ENCODE measurements at regions of chr2 and their contacts with region 1.

Region 1: GRCh38 chr2:216519154-216519762 is 20.6 kb downstream of the RPL37A start:
- DNase-seq: no peak
- ATAC-seq: peak; percentile 87 to 95 (median 90)
- H3K4me3 ChIP-seq: no peak overlapping the region
- H3K27ac ChIP-seq: no peak overlapping the region
- H3K4me1 ChIP-seq: no peaks in the 10 kb centered on the region
- H3K27me3 ChIP-seq: no peaks in the 10 kb centered on the region
- CTCF ChIP-seq: peak; percentile 82

Region 2: GRCh38 chr2:216233281-216233995 is 285.8 kb before region 1 on chr2:
- intact Hi-C with region 1: no loop called
- DNase-seq: no peak
- ATAC-seq: no peak
- H3K4me3 ChIP-seq: no peak overlapping the region
- H3K27ac ChIP-seq: no peak overlapping the region
- H3K4me1 ChIP-seq: no peaks in the 10 kb centered on the region
- H3K27me3 ChIP-seq: no peaks in the 10 kb centered on the region
- CTCF ChIP-seq: no peak

Region 3: GRCh38 chr2:216666461-216667233 is 147.4 kb after region 1 on chr2:
- intact Hi-C with region 1: loop called (anchors 1 to 2 kb)
- DNase-seq: peak; percentile 52 to 77
- ATAC-seq: peak; percentile 70 to 84 (median 76)
- H3K4me3 ChIP-seq: no peak overlapping the region
- H3K27ac ChIP-seq: no peak overlapping the region
- H3K4me1 ChIP-seq: no peaks in the 10 kb centered on the region
- H3K27me3 ChIP-seq: no peaks in the 10 kb centered on the region
- CTCF ChIP-seq: peak; percentile 99

Region 4: DNA sequence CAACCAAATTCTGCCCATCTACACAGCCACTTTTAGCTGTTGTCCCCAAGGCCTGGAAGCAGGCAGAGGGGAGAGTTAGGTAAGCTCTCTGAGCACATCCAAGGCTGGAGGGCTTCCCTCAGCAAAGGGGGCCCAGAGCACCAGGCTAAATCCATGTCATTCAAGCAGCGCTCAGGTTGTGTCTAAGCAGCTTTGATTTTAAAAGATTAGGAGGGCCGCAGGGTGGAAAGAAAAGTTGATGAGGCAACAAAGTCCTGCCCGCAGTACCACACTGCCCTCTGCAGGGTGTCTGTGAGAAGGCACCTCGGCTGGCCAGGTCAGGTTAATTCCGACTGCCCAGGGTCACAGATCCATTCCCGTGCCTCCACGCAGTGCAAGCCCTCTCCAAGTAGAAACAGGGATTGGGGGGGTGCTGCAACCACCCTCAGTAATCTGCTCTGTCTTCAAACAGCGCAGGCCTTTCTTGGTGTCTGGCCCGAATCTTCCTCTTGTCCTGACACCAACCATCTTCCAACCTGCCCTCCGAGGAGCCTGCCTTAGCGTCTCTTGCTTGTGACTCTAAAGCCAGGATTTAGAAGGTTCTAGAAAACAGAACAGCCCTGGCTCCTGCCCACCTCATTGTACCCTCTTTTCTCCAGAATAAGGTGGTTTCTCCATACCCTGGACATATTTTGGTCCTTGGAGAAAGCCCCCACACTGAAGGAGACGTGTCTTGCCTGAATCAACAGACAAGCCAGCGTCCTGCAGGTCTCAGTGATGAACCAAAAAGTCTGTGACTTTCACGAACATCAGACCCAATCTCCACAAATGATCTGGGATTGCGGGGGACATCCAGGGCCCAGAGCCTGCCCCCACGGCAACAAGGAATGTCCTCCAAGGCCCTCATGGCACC is 1194.4 kb after region 1 on chr2:
- intact Hi-C with region 1: loop called (anchors 5 kb)
- DNase-seq: peak; percentile 74 to 88
- ATAC-seq: peak; percentile 89 to 96 (median 91)
- H3K4me3 ChIP-seq: no peak overlapping the region
- H3K27ac ChIP-seq: peak overlapping the region; percentile 2
- H3K4me1 ChIP-seq: peaks cover 17% of the 10 kb centered on the region
- H3K27me3 ChIP-seq: no peaks in the 10 kb centered on the region
- CTCF ChIP-seq: peak; percentile 98

Region 5: DNA sequence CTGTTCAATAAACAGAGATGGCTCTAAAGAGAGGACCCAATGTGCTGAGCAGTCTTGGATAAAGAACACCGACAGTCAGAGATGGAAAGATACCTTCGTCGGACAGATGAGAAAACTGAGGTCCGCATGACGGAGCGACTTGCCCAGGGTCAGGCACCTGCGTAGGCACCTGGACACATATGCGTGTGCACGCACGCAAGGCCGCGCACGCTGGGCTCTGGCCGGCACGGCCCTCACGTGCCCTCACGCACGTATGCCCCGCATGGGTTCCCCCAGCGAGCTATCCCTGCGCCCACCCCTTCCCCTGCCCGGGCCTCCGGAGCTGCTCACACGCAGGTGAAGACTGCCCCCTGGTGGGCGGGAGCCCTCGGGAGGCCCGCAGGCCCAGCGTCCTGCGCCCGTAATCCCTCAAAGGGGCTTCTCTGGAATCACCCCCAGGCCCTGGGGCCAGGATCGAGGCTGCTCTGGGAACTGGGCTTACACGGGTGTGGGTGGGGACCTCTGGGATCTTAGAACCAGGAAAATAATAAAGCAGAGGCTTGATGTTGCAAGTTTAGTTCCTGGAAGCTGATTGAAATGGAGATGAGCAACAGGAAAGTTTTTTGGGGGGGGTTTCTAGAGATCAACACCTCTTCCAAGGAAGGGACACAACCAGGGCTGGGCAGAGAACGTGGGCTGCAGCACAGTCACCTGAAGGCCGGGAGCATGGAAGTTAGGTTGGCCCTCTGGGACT is 1237.3 kb after region 1 on chr2:
- intact Hi-C with region 1: loop called in 1 of 2 experiments (anchors 2 kb)
- DNase-seq: peak; percentile 78 to 87
- ATAC-seq: peak; percentile 85 to 90 (median 89)
- H3K4me3 ChIP-seq: peak overlapping the region; percentile 35
- H3K27ac ChIP-seq: no peak overlapping the region
- H3K4me1 ChIP-seq: no peaks in the 10 kb centered on the region
- H3K27me3 ChIP-seq: no peaks in the 10 kb centered on the region
- CTCF ChIP-seq: peak; percentile 95

Measured in psoas muscle (tissue), 8 donors.